Activated CD4-positive, alpha-beta T cell treated with anti-CD3 and anti-CD28 coated beads, Interleukin-2, amount 10 ng/mL, durations not matched to agents 24 days and 14 days (primary cell): ENCODE measurements at regions of chr7 and their contacts with region 1.

Region 1: DNA sequence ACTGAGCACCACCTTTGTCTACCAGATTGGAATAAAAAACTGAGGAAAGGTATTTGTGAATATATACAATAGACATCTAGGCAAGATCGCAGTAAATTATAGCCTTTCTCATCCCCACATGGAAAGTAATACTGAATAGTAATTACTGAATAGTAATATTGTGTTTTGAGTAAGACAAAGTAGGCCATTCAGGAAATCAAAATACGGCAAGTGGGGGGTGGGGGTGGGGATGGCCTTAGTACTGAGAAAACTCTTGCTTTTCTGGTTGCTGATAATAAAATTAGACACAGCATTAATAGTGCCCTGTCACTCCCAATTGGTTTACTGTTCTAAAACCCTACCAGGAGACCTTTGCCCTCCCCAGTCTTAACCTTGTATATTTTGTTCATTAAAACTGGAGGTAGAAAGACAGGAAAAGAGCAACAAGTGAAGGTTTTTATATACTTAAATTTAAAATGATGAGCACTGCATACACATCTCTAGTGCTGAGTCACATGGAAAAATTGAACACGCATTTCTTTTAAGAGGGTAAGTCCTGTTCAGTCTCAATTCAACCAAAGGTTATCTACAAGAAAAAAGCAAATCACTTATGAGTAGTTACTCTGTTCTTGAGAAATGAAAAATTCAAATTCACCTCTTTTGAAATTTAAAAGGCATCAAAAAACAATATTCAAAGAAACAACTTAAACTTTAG is 65.6 kb downstream of the IGF2BP3 start:
- DNase-seq: no peak
- H3K4me3 Mint-ChIP-seq: peak overlapping the region; percentile 23
- H3K27ac Mint-ChIP-seq: peak overlapping the region; percentile 88
- H3K4me1 Mint-ChIP-seq: peaks cover 16% of the 10 kb centered on the region
- H3K27me3 Mint-ChIP-seq: peaks cover 2% of the 10 kb centered on the region

Region 2: DNA sequence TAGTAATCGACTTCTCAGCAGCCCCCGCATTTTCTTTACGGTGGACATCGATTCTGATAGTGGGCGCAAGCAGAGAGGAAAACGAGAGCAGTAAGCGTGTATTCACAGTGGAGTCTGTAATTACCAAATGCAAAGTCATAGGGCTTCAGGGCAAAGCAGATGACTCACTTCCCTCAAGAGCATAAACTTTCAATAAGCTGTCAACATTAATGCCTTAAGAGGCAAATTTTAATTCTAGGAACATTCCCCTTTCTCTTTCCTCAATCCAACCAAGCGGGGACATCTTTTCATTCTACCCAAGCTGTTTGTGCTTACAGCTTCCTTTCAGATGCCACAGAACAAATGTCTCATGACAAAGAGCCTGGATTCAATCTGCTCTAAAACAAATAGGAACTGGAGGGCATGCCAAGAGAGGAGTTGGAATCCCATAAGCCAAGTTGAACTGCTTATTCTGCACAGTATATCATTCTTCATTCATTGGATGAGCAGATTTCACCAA is 57.0 kb before region 1 on chr7:
- intact Hi-C with region 1: loop called (anchors 2 kb)
- DNase-seq: peak; percentile 59
- H3K4me3 Mint-ChIP-seq: peak overlapping the region; percentile 56
- H3K27ac Mint-ChIP-seq: peak overlapping the region; percentile 64
- H3K4me1 Mint-ChIP-seq: peaks cover 28% of the 10 kb centered on the region
- H3K27me3 Mint-ChIP-seq: peaks cover 20% of the 10 kb centered on the region

Region 3: GRCh38 chr7:23394488-23395171 is 10.1 kb before region 1 on chr7:
- intact Hi-C with region 1: loop called (anchors 1 kb)
- DNase-seq: no peak
- H3K4me3 Mint-ChIP-seq: no peak overlapping the region
- H3K27ac Mint-ChIP-seq: no peak overlapping the region
- H3K4me1 Mint-ChIP-seq: peaks cover 12% of the 10 kb centered on the region
- H3K27me3 Mint-ChIP-seq: peaks cover 5% of the 10 kb centered on the region